A673 (cell line): ENCODE measurements at regions of chr12 and their contacts with region 1.

Region 1: DNA sequence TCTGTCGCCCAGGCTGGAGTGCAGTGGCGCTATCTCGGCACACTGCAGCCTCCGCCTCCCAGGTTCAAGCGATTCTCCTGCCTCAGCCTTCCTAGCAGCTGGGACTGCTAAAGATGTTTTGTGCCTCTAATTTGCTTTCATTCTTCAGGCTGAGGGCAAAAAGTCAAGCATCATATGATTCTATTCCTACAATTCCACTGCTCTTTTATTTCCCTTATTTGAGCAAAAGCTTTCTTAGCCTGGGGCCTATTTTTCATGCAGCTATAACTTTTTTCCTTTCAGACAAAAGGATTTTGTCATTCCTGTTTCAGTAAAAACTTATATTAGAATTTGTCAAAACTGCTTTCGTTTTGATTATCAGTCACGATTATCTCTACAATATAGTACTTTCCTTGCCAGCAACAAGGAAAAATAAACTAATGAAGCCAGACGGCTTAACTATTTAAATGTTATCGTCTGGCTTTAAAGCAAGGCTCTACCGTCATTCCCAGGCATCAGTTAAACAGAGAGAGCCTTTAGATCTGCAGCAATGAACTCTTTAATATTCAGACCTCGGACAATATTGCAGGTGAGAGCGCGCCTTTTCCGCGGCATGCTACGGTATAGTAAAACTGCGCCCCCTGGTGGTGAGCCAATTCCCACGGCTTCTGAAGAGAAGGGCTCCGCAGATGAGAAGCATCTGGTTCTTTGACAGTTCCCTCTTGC is 1.4 kb upstream of the SLC2A13 start:
- DNase-seq: peak; percentile 87
- H3K4me3 ChIP-seq: peak overlapping the region; percentile 33
- H3K27ac ChIP-seq: no peak overlapping the region
- H3K4me1 ChIP-seq: peaks cover 13% of the 10 kb centered on the region
- H3K27me3 ChIP-seq: no peaks in the 10 kb centered on the region
- CTCF ChIP-seq: peak; percentile 93

Region 2: GRCh38 chr12:39329018-39329417 is 778.2 kb before region 1 on chr12:
- CTCF ChIA-PET with region 1: no interaction called
- POLR2A ChIA-PET with region 1: no interaction called
- intact Hi-C with region 1: no loop called
- DNase-seq: peak; percentile 2
- H3K4me3 ChIP-seq: no peak overlapping the region
- H3K27ac ChIP-seq: no peak overlapping the region
- H3K4me1 ChIP-seq: no peaks in the 10 kb centered on the region
- H3K27me3 ChIP-seq: no peaks in the 10 kb centered on the region
- CTCF ChIP-seq: no peak

Region 3: GRCh38 chr12:39587225-39587624 is 520.0 kb before region 1 on chr12:
- CTCF ChIA-PET with region 1: no interaction called
- POLR2A ChIA-PET with region 1: no interaction called
- intact Hi-C with region 1: loop called (anchors 2 kb)
- DNase-seq: peak; percentile 58
- H3K4me3 ChIP-seq: no peak overlapping the region
- H3K27ac ChIP-seq: no peak overlapping the region
- H3K4me1 ChIP-seq: peaks cover 12% of the 10 kb centered on the region
- H3K27me3 ChIP-seq: no peaks in the 10 kb centered on the region
- CTCF ChIP-seq: peak; percentile 48

Region 4: DNA sequence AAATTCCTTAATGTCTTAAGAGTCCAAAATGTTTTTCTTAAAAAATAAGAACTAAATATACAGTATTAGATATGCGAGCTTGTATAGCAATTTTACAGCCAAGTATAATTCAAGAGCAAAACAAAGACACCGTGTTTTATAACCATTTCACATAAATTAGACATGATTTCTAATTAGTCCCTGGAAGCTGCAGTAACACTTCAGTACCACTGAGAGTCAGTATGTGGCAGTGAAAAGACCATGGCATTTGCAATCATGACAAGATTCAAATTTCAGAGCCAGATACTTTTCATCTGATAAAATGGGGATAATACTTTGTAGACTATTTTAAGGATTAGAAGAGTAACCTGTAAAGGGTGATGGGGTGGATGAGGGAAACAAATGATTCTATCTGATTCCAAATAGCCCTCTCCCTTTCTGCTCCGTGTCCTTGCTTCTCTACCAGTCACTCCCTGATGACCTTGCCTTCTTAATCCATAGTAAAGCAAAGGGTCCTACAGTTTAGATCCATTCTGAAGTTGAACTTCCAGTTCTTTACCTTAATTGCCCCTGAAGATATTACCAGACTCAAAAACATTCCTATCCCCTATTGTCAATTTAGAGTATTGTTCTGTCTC is 342.2 kb before region 1 on chr12:
- CTCF ChIA-PET with region 1: no interaction called
- POLR2A ChIA-PET with region 1: no interaction called
- intact Hi-C with region 1: loop called (anchors 1 kb)
- DNase-seq: peak; percentile 56
- H3K4me3 ChIP-seq: no peak overlapping the region
- H3K27ac ChIP-seq: no peak overlapping the region
- H3K4me1 ChIP-seq: no peaks in the 10 kb centered on the region
- H3K27me3 ChIP-seq: no peaks in the 10 kb centered on the region
- CTCF ChIP-seq: peak; percentile 93

Region 5: GRCh38 chr12:39807043-39807442 is 300.2 kb before region 1 on chr12:
- CTCF ChIA-PET with region 1: no interaction called
- POLR2A ChIA-PET with region 1: no interaction called
- intact Hi-C with region 1: loop called (anchors 5 kb)
- DNase-seq: peak; percentile 70
- H3K4me3 ChIP-seq: no peak overlapping the region
- H3K27ac ChIP-seq: no peak overlapping the region
- H3K4me1 ChIP-seq: no peaks in the 10 kb centered on the region
- H3K27me3 ChIP-seq: no peaks in the 10 kb centered on the region
- CTCF ChIP-seq: peak; percentile 74

Region 6: GRCh38 chr12:40010899-40011774 is 96.1 kb before region 1 on chr12:
- CTCF ChIA-PET with region 1: interaction called, 7 read pairs
- POLR2A ChIA-PET with region 1: no interaction called
- intact Hi-C with region 1: loop called (anchors 1 kb)
- DNase-seq: peak; percentile 84
- H3K4me3 ChIP-seq: peak overlapping the region; percentile 7
- H3K27ac ChIP-seq: no peak overlapping the region
- H3K4me1 ChIP-seq: peaks cover 7% of the 10 kb centered on the region
- H3K27me3 ChIP-seq: no peaks in the 10 kb centered on the region
- CTCF ChIP-seq: peak; percentile 89

Region 7: GRCh38 chr12:40152783-40153383 is 45.6 kb after region 1 on chr12:
- CTCF ChIA-PET with region 1: no interaction called
- POLR2A ChIA-PET with region 1: no interaction called
- intact Hi-C with region 1: loop called (anchors 5 kb)
- DNase-seq: peak; percentile 73
- H3K4me3 ChIP-seq: no peak overlapping the region
- H3K27ac ChIP-seq: no peak overlapping the region
- H3K4me1 ChIP-seq: no peaks in the 10 kb centered on the region
- H3K27me3 ChIP-seq: no peaks in the 10 kb centered on the region
- CTCF ChIP-seq: peak; percentile 88